GM10248 (cell line): ENCODE measurements at regions of chr3 and their contacts with region 1.

Region 1: DNA sequence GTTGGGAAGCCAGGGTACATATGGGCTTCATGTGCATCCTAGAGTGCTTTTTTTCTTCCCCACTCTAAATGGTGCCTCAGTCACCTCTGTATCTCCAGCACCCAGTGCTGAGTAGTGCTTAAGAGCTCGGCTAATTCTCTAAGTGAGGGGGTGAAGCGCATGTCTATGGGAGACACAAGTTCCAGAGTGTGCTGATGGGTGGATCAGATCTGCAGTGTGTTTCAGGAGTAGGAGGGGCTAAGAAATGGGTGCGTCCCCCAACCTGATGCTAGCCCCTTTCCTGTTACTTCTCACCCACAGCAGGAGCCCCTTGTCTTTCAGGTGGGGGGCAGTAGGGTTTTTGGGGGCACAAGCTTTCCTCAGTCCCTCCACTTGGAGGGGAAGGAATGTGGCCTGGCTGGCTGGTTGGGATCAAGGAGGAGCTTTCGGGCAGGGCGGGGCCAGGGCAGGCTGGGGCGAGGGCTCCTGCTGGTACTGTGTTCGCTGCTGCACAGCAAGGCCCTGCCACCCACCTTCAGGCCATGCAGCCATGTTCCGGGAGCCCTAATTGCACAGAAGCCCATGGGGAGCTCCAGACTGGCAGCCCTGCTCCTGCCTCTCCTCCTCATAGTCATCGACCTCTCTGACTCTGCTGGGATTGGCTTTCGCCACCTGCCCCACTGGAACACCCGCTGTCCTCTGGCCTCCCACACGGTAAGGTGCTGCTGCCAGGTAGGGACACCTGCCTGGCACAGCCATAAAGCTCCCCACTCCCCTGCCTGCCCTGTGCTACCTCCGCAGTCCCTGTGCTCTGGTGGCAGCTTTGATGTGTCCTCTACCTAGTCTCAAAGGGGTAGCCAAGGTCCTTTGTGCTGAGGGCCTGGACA is at the start of gene IL17RE:
- DNase-seq: no peak
- CTCF ChIP-seq: no peak

Region 2: DNA sequence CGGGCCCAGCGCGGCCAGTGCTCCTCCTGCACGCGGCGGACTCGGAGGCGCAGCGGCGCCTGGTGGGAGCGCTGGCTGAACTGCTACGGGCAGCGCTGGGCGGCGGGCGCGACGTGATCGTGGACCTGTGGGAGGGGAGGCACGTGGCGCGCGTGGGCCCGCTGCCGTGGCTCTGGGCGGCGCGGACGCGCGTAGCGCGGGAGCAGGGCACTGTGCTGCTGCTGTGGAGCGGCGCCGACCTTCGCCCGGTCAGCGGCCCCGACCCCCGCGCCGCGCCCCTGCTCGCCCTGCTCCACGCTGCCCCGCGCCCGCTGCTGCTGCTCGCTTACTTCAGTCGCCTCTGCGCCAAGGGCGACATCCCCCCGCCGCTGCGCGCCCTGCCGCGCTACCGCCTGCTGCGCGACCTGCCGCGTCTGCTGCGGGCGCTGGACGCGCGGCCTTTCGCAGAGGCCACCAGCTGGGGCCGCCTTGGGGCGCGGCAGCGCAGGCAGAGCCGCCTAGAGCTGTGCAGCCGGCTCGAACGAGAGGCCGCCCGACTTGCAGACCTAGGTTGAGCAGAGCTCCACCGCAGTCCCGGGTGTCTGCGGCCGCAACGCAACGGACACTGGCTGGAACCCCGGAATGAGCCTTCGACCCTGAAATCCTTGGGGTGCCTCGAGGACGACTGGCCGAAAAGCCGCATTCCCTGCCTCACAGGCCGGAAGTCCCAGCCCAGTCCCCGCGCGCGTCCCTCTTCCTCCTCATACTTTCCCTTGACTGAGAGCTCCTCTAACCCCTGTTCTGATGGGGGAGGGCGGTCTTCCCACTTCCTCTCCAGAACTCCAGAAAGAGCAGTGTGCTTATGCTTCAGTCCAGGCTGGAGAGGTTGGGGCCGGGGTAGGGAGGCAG is 12.9 kb after region 1 on chr3:
- CTCF ChIA-PET with region 1: interaction called, 25 read pairs
- POLR2A ChIA-PET with region 1: no interaction called
- DNase-seq: no peak
- CTCF ChIP-seq: peak; percentile 45